Left ventricle myocardium superior (tissue), 1 donor: ENCODE measurements at regions of chr1 and their contacts with region 1.

Region 1: DNA sequence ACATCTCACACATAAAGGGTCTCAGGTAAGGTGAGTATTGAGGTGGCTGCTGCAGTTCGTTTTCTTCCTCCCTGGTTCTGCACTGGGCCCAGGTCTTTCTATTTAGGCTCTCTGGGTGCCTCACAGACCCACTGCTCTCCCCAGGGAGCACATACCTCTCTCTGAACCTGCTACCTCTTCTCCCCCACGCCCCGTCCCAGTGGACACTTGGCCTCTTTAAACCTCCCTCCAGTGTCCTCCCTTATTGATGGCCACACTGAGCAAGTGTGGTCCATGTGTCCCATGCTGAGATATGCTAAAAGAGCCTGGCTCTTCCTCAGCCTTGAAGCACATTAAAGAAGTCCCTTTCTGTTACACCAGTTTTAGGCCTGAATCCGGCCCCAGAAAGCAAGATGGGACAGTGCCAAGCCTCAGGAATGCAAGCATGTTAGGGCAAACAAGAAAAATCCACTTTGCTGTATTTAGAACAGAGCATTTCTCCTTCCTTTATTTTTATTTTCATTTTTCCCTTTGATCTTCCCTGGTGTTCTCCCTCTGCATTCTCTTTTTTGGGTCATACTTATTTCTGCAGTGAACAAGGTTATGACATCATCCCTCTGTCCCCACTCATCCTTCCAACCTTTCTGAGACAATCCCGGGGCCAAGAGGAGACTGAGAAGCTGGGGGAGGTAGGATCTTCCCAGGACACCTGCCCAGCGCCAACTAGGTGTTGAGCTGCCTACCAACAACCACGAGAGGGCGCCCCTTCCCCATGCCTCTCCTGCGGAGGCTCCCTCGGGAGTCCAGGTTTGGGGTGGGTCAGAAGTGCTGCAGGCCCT is 5.0 kb upstream of the CHI3L2 start:
- DNase-seq: peak; percentile 83
- ATAC-seq: peak; percentile 80

Region 2: DNA sequence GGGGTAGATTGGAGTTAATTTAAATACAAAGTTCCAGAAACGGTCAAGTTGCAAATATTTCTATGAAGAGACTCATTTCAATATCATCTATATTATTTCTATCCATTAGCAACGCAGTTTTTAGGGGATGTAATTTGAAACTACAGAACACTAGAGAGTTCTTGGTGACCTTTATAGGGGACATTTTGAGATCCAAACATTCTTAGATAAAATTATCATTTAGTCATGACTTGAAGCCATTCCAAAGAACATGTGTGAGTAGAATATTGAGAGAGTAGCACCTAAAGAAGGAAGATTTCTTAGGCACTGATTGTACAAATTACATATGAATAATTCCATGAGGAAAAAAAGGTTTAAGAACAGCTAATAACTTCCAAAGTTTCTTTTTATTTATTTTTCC is 87.2 kb after region 1 on chr1:
- intact Hi-C with region 1: no loop called
- DNase-seq: no peak
- ATAC-seq: no peak

Region 3: GRCh38 chr1:111334169-111334568 is 111.7 kb after region 1 on chr1:
- intact Hi-C with region 1: loop called (anchors 10 kb)
- DNase-seq: no peak
- ATAC-seq: peak; percentile 64

Region 4: GRCh38 chr1:111399792-111400610 is 177.5 kb after region 1 on chr1:
- intact Hi-C with region 1: loop called (anchors 5 kb)
- DNase-seq: no peak
- ATAC-seq: no peak